HEK293 (cell line): ENCODE measurements at regions of chr15 and their contacts with region 1.

Region 1: DNA sequence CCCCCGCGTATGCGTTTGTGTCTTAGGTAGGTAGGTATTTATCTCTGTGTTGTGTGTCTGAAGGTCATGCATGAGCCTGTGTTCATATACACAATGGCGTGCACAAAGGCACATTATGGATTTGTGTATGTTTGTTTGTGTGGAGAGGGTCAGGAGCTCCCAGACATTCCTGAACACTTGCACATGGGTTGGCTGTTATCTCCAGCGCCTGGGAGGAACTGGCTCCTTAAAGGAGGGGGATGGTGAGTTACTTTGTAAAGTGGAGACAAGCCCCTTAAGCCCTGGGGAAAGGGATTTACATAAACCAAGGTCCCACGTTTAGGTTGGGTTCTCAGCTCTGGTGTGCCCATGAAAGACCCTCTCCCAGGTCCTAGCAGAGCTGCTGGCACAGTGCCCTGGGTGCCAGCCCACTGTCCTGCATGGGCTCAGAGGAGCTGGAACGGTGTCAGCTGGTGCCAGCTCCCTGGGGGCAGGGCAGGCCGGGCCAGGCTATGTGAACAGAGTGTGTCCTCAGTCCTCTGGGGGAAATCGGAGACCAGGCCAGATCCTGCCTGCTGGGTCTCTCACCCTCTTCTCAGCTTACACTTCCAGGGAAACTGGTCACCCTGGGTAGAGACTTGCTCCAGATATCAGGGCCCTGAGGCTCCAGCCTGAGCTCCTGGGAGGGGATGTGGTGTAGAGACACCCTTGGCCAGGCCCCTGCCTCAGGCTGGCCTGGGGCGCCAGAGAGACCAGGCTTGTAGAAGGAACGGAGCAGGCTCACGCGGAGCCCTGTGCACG is 25.1 kb downstream of the SNX33 start:
- H3K4me3 ChIP-seq: no peak overlapping the region
- H3K27ac ChIP-seq: peak overlapping the region; percentile 36; the same call in 1 of the 2 replicates
- H3K4me1 ChIP-seq: peaks cover 10% of the 10 kb centered on the region
- CTCF ChIP-seq: 0 out of 2 replicates have a peak, but pooled peaks have one; percentile 38

Region 2: GRCh38 chr15:75661091-75661777 is 11.6 kb before region 1 on chr15:
- CTCF ChIA-PET with region 1: interaction called, 3 read pairs
- POLR2A ChIA-PET with region 1: interaction called, 14 read pairs
- H3K4me3 ChIP-seq: no peak overlapping the region
- H3K27ac ChIP-seq: no peak overlapping the region
- H3K4me1 ChIP-seq: no peaks in the 10 kb centered on the region
- CTCF ChIP-seq: no peak

Region 3: DNA sequence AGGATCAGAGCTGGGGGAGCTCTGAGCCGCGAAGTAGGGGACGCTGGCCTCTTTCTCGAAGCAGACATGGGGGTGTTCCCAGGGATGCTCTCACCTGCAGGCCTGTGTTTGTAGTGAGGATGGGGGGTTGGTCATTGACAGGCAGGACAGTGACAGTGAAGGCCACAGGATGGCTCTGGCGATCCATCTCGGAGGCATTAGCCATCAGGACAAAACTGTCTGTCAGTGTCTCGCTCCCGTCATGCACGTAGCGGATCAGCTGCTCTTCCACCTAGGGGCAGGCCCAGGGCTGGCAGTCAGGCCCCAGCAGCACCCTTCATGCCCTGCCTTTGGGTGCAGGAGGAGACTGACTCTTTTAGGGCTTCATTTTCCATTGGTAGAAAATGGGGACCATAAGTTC is 11.8 kb after region 1 on chr15:
- CTCF ChIA-PET with region 1: interaction called, 17 read pairs
- POLR2A ChIA-PET with region 1: interaction called, 4 read pairs
- H3K4me3 ChIP-seq: no peak overlapping the region
- H3K27ac ChIP-seq: no peak overlapping the region
- H3K4me1 ChIP-seq: no peaks in the 10 kb centered on the region
- CTCF ChIP-seq: peak; percentile 46; the same call in 1 of the 2 replicates

Region 4: DNA sequence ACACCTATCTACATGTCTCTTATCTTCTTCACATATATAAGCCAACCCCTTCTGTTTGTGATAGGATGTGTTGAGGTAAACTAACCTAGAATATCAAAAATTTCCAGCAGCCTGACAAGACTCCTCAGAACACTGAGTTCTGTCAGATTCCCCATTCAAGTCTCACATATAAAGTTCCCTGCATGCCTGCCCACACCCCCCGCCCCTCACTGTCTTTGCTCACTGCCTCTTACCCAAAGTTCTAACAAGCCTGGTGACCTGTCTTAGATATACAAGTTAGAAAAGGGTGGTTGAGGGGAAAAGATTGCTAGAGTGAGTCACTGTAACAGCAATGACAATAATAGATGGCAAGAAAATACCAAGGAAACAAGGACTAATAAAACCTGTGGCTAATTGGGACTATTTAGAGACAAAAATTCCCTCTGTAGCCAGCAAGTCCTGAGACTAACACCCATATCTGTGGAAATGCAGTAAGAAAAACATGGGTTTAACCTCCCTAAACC is 270.9 kb after region 1 on chr15:
- CTCF ChIA-PET with region 1: no interaction called
- POLR2A ChIA-PET with region 1: no interaction called
- H3K4me3 ChIP-seq: no peak overlapping the region
- H3K27ac ChIP-seq: no peak overlapping the region
- H3K4me1 ChIP-seq: no peaks in the 10 kb centered on the region
- CTCF ChIP-seq: no peak